IMR-90 (cell line): ENCODE measurements at regions of chr19 and their contacts with region 1.

Region 1: GRCh38 chr19:39341719-39342604 is at the start of gene SAMD4B:
- DNase-seq: peak; percentile 97
- ATAC-seq: peak; percentile 95
- H3K4me3 ChIP-seq: peak within 1 kb of the TSS; percentile 84
- H3K27ac ChIP-seq: peak within 1 kb of the TSS; percentile 84
- H3K4me1 ChIP-seq: peaks cover 11% of the 10 kb centered on the region
- H3K27me3 ChIP-seq: no peaks in the 10 kb centered on the region
- CTCF ChIP-seq: peak; percentile 80
- POLR2A ChIP-seq: peak; percentile 95
- RAD21 ChIP-seq: peak; percentile 25; the same call in 1 of the 2 replicates
- total RNA-seq, gene SAMD4B: 18.3 and 19.2 TPM in 2 replicates

Region 2: DNA sequence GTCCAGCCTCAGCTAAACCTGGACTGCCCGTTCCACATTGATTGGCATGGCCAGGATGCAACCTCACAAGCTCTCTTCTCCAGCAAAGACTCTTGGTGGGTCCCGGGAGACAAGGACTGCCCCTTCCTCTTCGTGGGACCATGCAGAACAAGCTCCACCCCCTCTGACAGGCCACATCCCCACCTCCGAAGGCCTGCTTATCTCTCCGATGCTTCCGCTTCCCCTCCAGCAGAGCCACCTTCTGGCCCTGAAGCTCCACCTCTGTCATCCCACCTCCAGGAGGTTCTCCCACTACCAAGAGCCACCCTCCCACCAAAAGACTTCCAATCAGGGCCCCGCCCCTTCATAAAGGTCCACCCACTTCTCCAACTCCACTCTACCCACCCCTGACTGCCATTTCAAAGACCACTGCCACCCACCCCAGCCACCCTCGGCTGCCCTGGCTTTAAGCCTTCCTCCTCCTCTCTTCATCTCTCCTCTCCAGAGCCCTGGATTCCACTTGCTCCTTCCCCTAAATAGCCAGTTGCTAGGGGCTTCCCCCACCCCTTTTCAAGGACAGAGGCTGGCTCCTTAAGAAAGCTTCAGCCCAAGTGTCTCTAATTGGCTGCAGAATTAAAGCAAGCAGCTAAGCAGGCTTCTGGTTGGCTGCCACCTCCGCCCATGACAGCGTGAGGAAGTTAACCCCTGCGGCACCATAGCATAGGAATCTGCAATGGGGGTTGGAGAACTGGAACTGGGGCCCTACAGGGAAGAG is 31.2 kb before region 1 on chr19:
- CTCF ChIA-PET with region 1: no interaction called
- POLR2A ChIA-PET with region 1: no interaction called
- dilution Hi-C with region 1: no loop called
- in situ Hi-C with region 1: no loop called
- intact Hi-C with region 1: no loop called
- DNase-seq: no peak
- ATAC-seq: no peak
- H3K4me3 ChIP-seq: no peak overlapping the region
- H3K27ac ChIP-seq: no peak overlapping the region
- H3K4me1 ChIP-seq: no peaks in the 10 kb centered on the region; the same call in 1 of the 2 replicates
- H3K27me3 ChIP-seq: peaks cover 36% of the 10 kb centered on the region
- CTCF ChIP-seq: no peak
- POLR2A ChIP-seq: no peak
- RAD21 ChIP-seq: no peak

Region 3: DNA sequence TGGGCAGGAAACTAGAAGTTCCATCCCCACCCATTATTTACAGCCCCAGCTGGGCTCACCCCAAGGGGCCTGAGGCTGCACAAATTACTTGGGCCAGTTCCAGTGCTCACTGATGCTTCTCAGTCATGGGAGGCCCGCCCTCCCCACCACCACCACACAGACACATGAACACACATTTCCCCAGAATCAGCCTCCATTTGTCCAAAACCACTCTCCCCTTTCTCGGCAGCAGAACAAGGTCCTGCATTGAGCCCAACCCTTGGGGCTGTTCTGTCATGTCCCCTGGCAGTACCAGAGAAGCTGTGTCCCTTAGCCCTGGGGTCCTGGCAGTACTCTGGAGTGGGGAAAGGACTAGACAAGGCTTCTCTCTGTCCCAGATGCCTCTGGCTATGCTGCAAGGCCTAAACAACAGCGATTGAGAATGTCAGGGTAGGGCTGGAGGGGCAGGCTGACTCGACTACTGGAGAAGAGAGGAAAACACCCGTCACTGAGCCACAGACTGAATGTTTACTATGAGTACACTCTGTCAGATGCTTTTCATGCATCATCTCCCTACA is 22.0 kb after region 1 on chr19:
- CTCF ChIA-PET with region 1: no interaction called
- POLR2A ChIA-PET with region 1: no interaction called
- dilution Hi-C with region 1: no loop called
- in situ Hi-C with region 1: no loop called
- intact Hi-C with region 1: loop called (anchors 2 kb)
- DNase-seq: peak; percentile 80
- ATAC-seq: peak; percentile 62
- H3K4me3 ChIP-seq: no peak overlapping the region
- H3K27ac ChIP-seq: peak overlapping the region; percentile 72
- H3K4me1 ChIP-seq: peaks cover 25% of the 10 kb centered on the region
- H3K27me3 ChIP-seq: no peaks in the 10 kb centered on the region
- CTCF ChIP-seq: no peak
- POLR2A ChIP-seq: 0 out of 2 replicates have a peak, but pooled peaks have one; percentile 26
- RAD21 ChIP-seq: no peak

Region 4: GRCh38 chr19:39390755-39391592 is 49.0 kb after region 1 on chr19 and contains the starts of genes MED29 and PAF1:
- CTCF ChIA-PET with region 1: no interaction called
- POLR2A ChIA-PET with region 1: no interaction called
- dilution Hi-C with region 1: no loop called
- in situ Hi-C with region 1: no loop called
- intact Hi-C with region 1: loop called (anchors 2 kb)
- DNase-seq: peak; percentile 100
- ATAC-seq: peak; percentile 95
- H3K4me3 ChIP-seq: peak within 1 kb of the TSS; percentile 70
- H3K27ac ChIP-seq: peak within 1 kb of the TSS; percentile 92
- H3K4me1 ChIP-seq: peaks cover 12% of the 10 kb centered on the region
- H3K27me3 ChIP-seq: no peaks in the 10 kb centered on the region
- CTCF ChIP-seq: 0 out of 2 replicates have a peak, but pooled peaks have one; percentile 6
- POLR2A ChIP-seq: peak; percentile 98
- RAD21 ChIP-seq: 0 out of 2 replicates have a peak, but pooled peaks have one; percentile 8
- total RNA-seq, gene MED29: 15.6 and 17.6 TPM in 2 replicates
- total RNA-seq, gene PAF1: 45.7 and 57.8 TPM in 2 replicates